Posterior cingulate gyrus (tissue), 11 donors: ENCODE measurements at regions of chr12 and their contacts with region 1.

Region 1: GRCh38 chr12:102957339-102958050 is at the start of gene ASCL1:
- DNase-seq: peak in 9 of 10 donors; percentile 37 to 92 (median 50)

Region 2: DNA sequence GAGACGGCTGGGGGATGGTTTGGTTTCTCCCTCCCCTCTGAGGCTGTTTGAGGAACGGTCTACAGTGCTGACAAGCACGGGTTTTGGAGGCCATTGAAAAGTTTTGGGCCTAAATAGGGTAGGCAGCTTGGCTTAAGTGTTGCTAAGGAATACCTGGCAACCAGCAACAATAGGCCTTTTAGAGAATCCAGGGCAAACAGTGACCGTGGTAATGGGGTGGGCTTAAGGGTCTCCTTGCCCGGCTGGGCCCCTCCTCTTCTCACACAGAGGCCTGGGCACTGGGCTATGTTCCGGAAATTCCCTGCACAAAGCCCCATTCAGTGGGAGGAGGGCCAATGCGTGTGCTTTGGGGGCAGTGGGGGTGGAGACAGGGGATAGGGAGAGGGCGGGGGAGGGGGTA is 55.4 kb after region 1 on chr12:
- intact Hi-C with region 1: loop called (anchors 2 kb)
- DNase-seq: peak; percentile 17 to 82 (median 44)

Region 3: DNA sequence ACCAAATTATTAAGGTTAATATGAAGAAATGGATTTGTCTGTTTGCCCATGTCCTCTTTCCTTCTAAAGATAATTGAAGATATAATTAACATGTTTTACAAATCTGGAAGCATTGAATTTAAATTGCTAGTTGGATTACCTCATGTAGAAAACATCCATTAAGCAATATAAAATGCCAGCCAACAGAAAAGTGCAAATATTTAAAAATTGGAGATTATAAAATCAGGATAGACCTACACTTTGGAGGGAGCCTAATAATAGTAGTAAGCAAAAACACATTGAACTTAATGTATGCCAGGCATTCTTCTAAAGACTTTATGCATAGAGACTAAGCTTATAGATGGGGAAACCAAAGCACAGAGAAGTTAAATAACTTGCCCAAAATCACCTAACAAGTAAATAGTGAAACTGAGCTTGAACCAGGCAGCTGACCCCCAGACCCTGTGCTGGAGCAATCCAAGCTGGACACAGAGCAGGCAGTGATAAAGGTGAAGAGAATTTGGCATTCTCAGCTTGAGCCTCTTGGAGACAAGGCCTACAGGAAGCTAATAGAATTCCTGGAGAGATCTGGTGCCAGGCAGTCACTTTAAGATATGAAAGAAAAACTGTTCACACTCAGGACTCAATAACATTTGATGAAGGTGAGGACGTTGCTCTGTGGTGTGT is 119.7 kb after region 1 on chr12:
- intact Hi-C with region 1: no loop called
- DNase-seq: peak in 1 of 10 donors; percentile 35